CD8-positive, alpha-beta memory T cell (primary cell): ENCODE measurements at regions of chr15 and their contacts with region 1.

Region 1: GRCh38 chr15:89874926-89875564 is 18.7 kb downstream of the AP3S2 start:
- DNase-seq: peak; percentile 58 to 84 (median 69)
- H3K4me3 ChIP-seq: no peak overlapping the region
- H3K4me3 Mint-ChIP-seq: no peak overlapping the region
- H3K27ac ChIP-seq: no peak overlapping the region
- H3K27ac Mint-ChIP-seq: peak overlapping the region in 2 of 8 donors; percentile 54 to 57
- H3K4me1 ChIP-seq: peaks cover 6% of the 10 kb centered on the region
- H3K4me1 Mint-ChIP-seq: peaks cover 7 to 12% (median 8%) of the 10 kb centered on the region in 3 donors
- H3K27me3 ChIP-seq: no peaks in the 10 kb centered on the region
- H3K27me3 Mint-ChIP-seq: no peaks in the 10 kb centered on the region

Region 2: GRCh38 chr15:89728254-89728653 is 146.8 kb before region 1 on chr15:
- CTCF ChIA-PET with region 1: no interaction called
- POLR2A ChIA-PET with region 1: no interaction called
- DNase-seq: no peak
- H3K4me3 ChIP-seq: no peak overlapping the region
- H3K4me3 Mint-ChIP-seq: no peak overlapping the region
- H3K27ac ChIP-seq: no peak overlapping the region
- H3K27ac Mint-ChIP-seq: no peak overlapping the region
- H3K4me1 ChIP-seq: no peaks in the 10 kb centered on the region
- H3K4me1 Mint-ChIP-seq: no peaks in the 10 kb centered on the region
- H3K27me3 ChIP-seq: no peaks in the 10 kb centered on the region
- H3K27me3 Mint-ChIP-seq: peaks cover 9 to 26% of the 10 kb centered on the region in 2 donors

Region 3: GRCh38 chr15:89740137-89740536 is 134.9 kb before region 1 on chr15:
- CTCF ChIA-PET with region 1: interaction called, 38 read pairs
- POLR2A ChIA-PET with region 1: no interaction called
- DNase-seq: peak in 4 of 5 donors; percentile 42 to 60 (median 60)
- H3K4me3 ChIP-seq: no peak overlapping the region
- H3K4me3 Mint-ChIP-seq: peak overlapping the region in 3 of 7 donors; percentile 43 to 62 (median 58)
- H3K27ac ChIP-seq: no peak overlapping the region
- H3K27ac Mint-ChIP-seq: no peak overlapping the region
- H3K4me1 ChIP-seq: no peaks in the 10 kb centered on the region
- H3K4me1 Mint-ChIP-seq: peaks cover 2 to 4% (median 3%) of the 10 kb centered on the region in 3 donors
- H3K27me3 ChIP-seq: no peaks in the 10 kb centered on the region
- H3K27me3 Mint-ChIP-seq: peaks cover 10 to 25% of the 10 kb centered on the region in 2 donors

Region 4: GRCh38 chr15:89760303-89761008 is 114.6 kb before region 1 on chr15:
- CTCF ChIA-PET with region 1: interaction called, 19 read pairs
- POLR2A ChIA-PET with region 1: no interaction called
- DNase-seq: peak; percentile 17 to 67 (median 44)
- H3K4me3 ChIP-seq: no peak overlapping the region
- H3K4me3 Mint-ChIP-seq: no peak overlapping the region
- H3K27ac ChIP-seq: peak overlapping the region; percentile 38
- H3K27ac Mint-ChIP-seq: no peak overlapping the region
- H3K4me1 ChIP-seq: no peaks in the 10 kb centered on the region
- H3K4me1 Mint-ChIP-seq: no peaks in the 10 kb centered on the region
- H3K27me3 ChIP-seq: no peaks in the 10 kb centered on the region
- H3K27me3 Mint-ChIP-seq: peaks cover 4 to 12% of the 10 kb centered on the region in 2 donors

Region 5: GRCh38 chr15:89888214-89888804 is 13.3 kb after region 1 on chr15:
- CTCF ChIA-PET with region 1: interaction called, 29 read pairs
- POLR2A ChIA-PET with region 1: interaction called, 8 read pairs
- DNase-seq: no peak
- H3K4me3 ChIP-seq: no peak overlapping the region
- H3K4me3 Mint-ChIP-seq: no peak overlapping the region
- H3K27ac ChIP-seq: no peak overlapping the region
- H3K27ac Mint-ChIP-seq: peak overlapping the region in 1 of 8 donors; percentile 11
- H3K4me1 ChIP-seq: peaks cover 24% of the 10 kb centered on the region
- H3K4me1 Mint-ChIP-seq: peaks cover 20 to 35% (median 34%) of the 10 kb centered on the region in 3 donors
- H3K27me3 ChIP-seq: no peaks in the 10 kb centered on the region
- H3K27me3 Mint-ChIP-seq: no peaks in the 10 kb centered on the region

Region 6: DNA sequence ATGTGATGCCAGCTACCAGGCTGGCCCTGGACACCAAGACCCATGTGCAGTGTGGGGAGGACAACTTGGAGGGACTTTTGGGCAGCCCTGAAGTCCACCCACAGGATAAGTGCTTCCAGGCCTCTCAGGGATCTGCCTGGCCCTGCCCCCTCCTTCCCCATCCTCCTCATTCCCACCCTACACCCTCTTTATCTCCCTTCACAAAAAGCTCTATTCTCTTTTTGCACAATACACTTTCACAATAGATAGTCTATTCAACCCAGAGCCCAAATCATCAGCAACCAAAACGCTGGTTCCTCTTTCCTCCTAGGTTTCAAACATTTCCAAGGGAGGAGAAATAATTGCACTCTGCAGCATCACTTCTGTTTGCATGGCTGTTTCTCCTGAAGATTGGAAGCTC is 118.3 kb after region 1 on chr15:
- CTCF ChIA-PET with region 1: no interaction called
- POLR2A ChIA-PET with region 1: no interaction called
- DNase-seq: no peak
- H3K4me3 ChIP-seq: no peak overlapping the region
- H3K4me3 Mint-ChIP-seq: no peak overlapping the region
- H3K27ac ChIP-seq: no peak overlapping the region
- H3K27ac Mint-ChIP-seq: no peak overlapping the region
- H3K4me1 ChIP-seq: no peaks in the 10 kb centered on the region
- H3K4me1 Mint-ChIP-seq: no peaks in the 10 kb centered on the region
- H3K27me3 ChIP-seq: no peaks in the 10 kb centered on the region
- H3K27me3 Mint-ChIP-seq: no peaks in the 10 kb centered on the region